CD14-positive monocyte (primary cell): ENCODE measurements at regions of chr11 and their contacts with region 1.

Region 1: DNA sequence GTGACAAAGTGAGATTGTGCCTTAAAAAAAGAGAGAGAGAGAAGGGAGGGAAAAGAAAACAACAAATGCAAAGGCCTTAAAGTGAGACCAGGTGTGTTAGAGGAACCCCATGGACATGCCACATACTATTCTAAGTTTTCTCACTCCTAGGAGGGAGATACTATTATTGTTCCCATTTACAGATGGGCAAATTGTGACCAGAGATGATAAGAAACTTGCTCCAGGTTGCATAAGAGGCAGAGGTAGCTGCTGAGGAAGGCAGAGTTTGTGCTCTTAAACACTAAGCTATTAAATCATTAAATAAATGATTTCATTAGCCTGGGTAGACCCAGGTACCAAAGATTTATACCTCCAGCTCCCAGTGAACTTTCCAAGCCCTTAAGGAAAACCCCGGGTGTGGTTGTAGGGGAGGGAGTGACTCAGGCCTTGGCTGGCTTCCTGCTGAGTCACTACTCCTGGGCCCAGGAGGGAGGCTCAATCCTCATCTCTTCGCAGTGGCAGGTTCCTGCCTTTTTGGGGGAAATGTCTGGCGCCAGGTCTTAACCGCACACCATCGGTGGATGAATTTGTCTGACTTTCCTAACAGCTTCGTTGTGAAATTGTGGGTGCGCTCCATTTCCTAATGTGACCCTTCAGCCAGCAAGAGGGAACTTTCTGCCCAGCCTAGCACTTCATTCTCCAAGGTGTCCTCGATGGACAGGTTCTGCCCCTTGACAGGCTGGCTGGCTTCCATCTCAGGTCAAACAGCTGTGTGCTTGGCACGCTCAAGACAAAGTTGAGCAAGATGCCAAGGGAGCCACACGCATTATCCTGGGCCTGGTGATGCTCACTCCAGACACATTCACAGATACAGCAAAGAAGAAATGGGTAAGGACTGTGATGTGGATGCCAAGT is 33.4 kb upstream of the PTPRJ start:
- DNase-seq: peak; percentile 86 to 97 (median 93)
- H3K4me3 ChIP-seq: peak overlapping the region in 1 of 3 experiments; percentile 32
- H3K4me3 Mint-ChIP-seq: peak overlapping the region in 1 of 2 donors; percentile 26
- H3K27ac ChIP-seq: peak overlapping the region; percentile 42 to 72
- H3K27ac Mint-ChIP-seq: peak overlapping the region; percentile 82 to 97 (median 91)
- H3K4me1 ChIP-seq: peaks cover 72% of the 10 kb centered on the region in 2 donors
- H3K4me1 Mint-ChIP-seq: peaks cover 70% of the 10 kb centered on the region
- H3K27me3 ChIP-seq: no peaks in the 10 kb centered on the region
- H3K27me3 Mint-ChIP-seq: peaks cover 2 to 10% (median 3%) of the 10 kb centered on the region in 3 donors
- CTCF ChIP-seq: no peak

Region 2: DNA sequence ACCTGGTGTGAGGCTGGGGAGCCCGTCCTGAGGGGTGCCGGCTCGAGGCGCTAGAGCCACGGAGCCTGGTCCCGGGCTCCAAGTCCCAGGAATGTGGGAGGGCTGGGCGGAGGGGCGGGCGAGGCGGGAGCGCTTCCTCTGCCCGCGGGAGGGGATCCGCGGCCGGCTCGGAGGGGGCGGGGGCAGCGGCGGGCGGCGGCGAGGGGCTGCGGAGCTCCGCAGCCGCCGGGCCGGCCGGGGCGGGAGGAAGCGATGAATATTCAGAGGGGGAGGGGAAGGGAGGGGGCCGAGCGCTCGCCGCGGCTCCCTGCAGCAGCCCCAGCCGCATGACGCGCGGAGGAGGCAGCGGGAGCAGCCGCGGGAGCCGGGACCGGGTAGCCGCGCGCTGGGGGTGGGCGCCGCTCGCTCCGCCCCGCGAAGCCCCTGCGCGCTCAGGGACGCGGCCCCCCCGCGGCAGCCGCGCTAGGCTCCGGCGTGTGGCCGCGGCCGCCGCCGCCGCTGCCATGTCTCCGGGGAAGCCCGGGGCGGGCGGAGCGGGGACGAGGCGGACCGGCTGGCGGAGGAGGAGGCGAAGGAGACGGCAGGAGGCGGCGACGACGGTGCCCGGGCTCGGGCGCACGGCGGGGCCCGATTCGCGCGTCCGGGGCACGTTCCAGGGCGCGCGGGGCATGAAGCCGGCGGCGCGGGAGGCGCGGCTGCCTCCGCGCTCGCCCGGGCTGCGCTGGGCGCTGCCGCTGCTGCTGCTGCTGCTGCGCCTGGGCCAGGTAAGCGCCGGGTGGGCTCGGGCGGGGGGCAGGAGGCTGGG is 33.5 kb after region 1 on chr11 and contains the start of gene PTPRJ:
- intact Hi-C with region 1: loop called (anchors 5 kb)
- DNase-seq: peak in 2 of 3 donors; percentile 46 to 67
- H3K4me3 ChIP-seq: peak within 1 kb of the TSS; percentile 69 to 96 (median 80)
- H3K4me3 Mint-ChIP-seq: peak within 1 kb of the TSS; percentile 94 to 98
- H3K27ac ChIP-seq: peak within 1 kb of the TSS; percentile 71 to 76
- H3K27ac Mint-ChIP-seq: peak within 1 kb of the TSS in 6 of 7 donors; percentile 6 to 96 (median 79)
- H3K4me1 ChIP-seq: peaks cover 48 to 59% of the 10 kb centered on the region in 2 donors
- H3K4me1 Mint-ChIP-seq: peaks cover 55% of the 10 kb centered on the region
- H3K27me3 ChIP-seq: peaks cover 0 to 7% of the 10 kb centered on the region in 2 donors
- H3K27me3 Mint-ChIP-seq: peaks cover 0 to 11% (median 7%) of the 10 kb centered on the region in 3 donors
- CTCF ChIP-seq: no peak
- polyA plus RNA-seq, gene PTPRJ: 10.0 to 36.4 (median 14.6) TPM